ENCODE measurements at regions of chr2 and their contacts with region 1.

Region 1: DNA sequence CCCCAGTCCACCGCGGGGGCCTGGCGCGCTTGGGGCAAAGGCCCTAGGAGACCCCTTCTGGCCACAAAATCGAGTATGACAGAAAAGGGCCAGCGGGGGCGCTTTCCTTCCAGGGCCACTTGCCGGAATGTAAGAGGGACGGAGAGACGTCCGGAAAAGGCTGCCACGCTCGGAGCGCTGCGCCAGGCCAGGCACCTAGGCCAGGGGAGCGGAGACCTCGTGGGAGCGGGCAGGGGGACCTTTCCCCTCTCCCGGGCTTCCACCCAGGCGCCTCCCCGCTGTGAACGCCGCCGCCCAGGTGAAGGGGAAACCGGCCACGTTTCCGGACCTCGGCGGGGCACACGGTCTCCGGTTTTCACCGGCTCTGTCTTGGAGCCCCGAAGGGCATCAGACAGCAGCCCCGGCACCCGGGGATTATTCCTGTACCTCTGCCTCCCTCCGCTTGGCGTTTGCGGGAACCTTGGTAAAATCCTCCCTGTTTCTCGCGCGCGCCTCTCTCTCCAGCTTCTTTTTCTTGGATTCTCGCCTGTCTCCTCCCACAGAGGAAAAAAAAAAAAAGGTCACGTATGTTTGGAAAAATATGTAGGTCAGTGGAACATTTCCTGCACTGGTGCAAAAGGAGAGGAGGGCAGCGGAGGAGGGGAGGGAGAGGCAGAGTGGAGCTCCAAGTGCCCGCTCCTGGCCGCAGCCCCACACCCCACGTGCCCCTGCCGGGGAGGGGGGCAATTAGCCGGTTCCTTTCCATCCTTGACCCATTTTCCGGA is 1.2 kb upstream of the NPAS2 start:
- DNase-seq: peak; percentile 38 to 88
- H3K4me3 ChIP-seq: peak overlapping the region; percentile 38
- CTCF ChIP-seq: no peak
- POLR2A ChIP-seq: no peak

Region 2: DNA sequence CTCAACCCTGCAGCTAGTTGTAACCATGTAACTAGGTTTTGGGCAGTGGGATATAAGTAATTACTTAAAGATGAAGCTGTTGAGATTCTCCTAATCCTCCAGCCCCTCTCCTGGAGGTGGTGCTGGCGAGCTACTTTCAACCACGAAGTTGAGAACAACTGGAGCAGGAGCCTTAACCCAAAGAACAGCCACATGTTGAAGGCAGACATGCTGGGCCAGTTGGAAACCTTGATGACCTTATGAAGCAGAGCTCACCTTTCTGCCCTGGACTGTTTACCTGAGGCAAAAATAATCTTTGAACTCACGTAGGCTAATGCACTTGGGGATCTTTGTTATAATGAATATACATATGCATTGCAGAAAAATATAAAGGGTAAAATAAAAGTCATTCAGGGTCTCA is 88.4 kb before region 1 on chr2:
- intact Hi-C with region 1: loop called (anchors 10 kb)
- DNase-seq: peak in 1 of 2 donors; percentile 42
- H3K4me3 ChIP-seq: no peak overlapping the region
- CTCF ChIP-seq: no peak
- POLR2A ChIP-seq: no peak

Region 3: DNA sequence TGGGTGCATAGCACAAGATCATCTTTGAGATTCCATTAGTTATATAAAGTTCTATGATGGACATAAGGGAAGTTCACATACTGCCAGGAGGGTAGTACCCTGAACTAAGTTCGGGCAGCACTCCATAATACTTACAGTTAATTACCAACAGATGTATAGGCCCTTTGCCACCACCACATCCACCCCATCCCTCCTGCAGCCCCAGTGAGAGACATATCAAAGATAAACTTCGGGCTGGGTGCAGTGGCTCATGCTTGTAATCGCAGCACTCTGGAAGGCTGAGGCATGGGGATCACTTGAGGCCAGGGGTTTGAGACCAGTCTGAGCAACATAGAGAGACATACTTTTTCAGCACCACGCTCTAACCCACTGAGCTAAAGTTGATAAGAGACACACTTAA is 45.2 kb before region 1 on chr2:
- intact Hi-C with region 1: no loop called
- DNase-seq: no peak
- H3K4me3 ChIP-seq: no peak overlapping the region
- CTCF ChIP-seq: no peak
- POLR2A ChIP-seq: no peak

Measured in lower leg skin (tissue), 4 donors.